CD4-positive, alpha-beta memory T cell (primary cell): ENCODE measurements at regions of chr3 and their contacts with region 1.

Region 1: GRCh38 chr3:52339612-52340011 is 23.5 kb downstream of the DNAH1 start:
- DNase-seq: peak; percentile 64 to 82 (median 79)
- H3K4me3 ChIP-seq: no peak overlapping the region
- H3K4me3 Mint-ChIP-seq: no peak overlapping the region
- H3K27ac ChIP-seq: no peak overlapping the region
- H3K27ac Mint-ChIP-seq: peak overlapping the region in 6 of 7 donors; percentile 12 to 88 (median 52)
- H3K4me1 ChIP-seq: no peaks in the 10 kb centered on the region
- H3K4me1 Mint-ChIP-seq: peaks cover 7 to 10% (median 8%) of the 10 kb centered on the region in 4 donors
- H3K27me3 ChIP-seq: no peaks in the 10 kb centered on the region
- H3K27me3 Mint-ChIP-seq: no peaks in the 10 kb centered on the region

Region 2: GRCh38 chr3:52001443-52001974 is 338.1 kb before region 1 on chr3:
- CTCF ChIA-PET with region 1: interaction called, 8 read pairs
- POLR2A ChIA-PET with region 1: no interaction called
- intact Hi-C with region 1: loop called (anchors 5 kb)
- DNase-seq: peak; percentile 81 to 86 (median 84)
- H3K4me3 ChIP-seq: no peak overlapping the region
- H3K4me3 Mint-ChIP-seq: peak overlapping the region in 5 of 8 donors; percentile 4 to 26 (median 8)
- H3K27ac ChIP-seq: no peak overlapping the region
- H3K27ac Mint-ChIP-seq: peak overlapping the region in 4 of 7 donors; percentile 46 to 80 (median 60)
- H3K4me1 ChIP-seq: peaks cover 21% of the 10 kb centered on the region
- H3K4me1 Mint-ChIP-seq: peaks cover 3 to 22% (median 12%) of the 10 kb centered on the region in 4 donors
- H3K27me3 ChIP-seq: no peaks in the 10 kb centered on the region
- H3K27me3 Mint-ChIP-seq: no peaks in the 10 kb centered on the region

Region 3: DNA sequence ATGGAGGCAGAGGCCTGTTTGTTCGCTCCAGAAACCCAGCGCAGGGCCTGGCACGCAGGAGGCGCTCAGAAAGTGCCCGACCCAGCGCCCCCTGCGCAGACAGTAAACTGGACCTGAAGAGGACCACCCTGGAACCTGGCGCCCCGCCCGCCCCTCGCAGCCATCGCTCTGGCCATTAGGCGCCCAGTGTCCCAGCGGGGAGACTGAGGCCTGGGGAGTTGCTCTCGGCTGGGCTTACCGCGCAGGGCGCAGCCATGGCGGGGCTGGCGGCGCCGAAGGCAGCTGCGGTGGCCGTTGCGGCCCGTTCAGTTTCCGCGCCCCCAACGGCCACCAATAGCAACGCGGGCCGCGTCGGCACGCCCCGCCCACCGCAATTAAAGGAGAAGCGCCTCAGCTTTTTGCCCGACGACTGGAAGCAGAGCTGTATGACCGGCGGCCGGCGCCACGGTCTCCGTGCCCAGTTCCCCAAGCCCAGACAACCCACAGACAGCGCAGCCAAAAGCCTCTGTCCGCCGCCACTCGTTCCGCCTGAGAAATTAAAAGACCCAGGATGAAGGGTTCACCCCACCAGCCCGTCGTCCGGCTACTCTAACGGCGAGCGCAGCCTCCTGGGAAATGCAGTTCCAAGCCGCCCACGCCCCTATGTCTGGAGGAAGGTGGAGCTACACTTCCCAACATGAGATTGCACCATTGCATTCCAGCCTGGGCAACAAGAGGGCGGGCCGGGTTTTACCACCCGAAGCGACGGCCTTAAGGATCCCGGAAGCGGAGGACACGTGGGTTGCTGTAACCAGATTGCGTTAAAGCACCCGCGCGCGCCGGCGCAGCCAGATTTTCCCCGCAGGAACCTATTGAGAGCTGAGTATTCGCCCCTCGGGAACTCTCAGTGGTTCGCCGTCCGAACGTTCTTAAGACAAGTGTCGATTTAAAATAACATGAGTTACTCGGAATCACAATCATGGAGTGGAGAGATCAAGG is 185.2 kb before region 1 on chr3 and contains the start of gene POC1A:
- CTCF ChIA-PET with region 1: interaction called, 12 read pairs
- POLR2A ChIA-PET with region 1: no interaction called
- intact Hi-C with region 1: no loop called
- DNase-seq: peak; percentile 83 to 90 (median 85)
- H3K4me3 ChIP-seq: peak within 1 kb of the TSS; percentile 93 to 95
- H3K4me3 Mint-ChIP-seq: peak within 1 kb of the TSS; percentile 93 to 98 (median 97)
- H3K27ac ChIP-seq: peak within 1 kb of the TSS; percentile 74
- H3K27ac Mint-ChIP-seq: peak within 1 kb of the TSS; percentile 95 to 98 (median 98)
- H3K4me1 ChIP-seq: peaks cover 13% of the 10 kb centered on the region
- H3K4me1 Mint-ChIP-seq: peaks cover 3 to 15% (median 8%) of the 10 kb centered on the region in 4 donors
- H3K27me3 ChIP-seq: no peaks in the 10 kb centered on the region
- H3K27me3 Mint-ChIP-seq: no peaks in the 10 kb centered on the region
- total RNA-seq, gene POC1A: 0.99 to 1.1 TPM

Region 4: DNA sequence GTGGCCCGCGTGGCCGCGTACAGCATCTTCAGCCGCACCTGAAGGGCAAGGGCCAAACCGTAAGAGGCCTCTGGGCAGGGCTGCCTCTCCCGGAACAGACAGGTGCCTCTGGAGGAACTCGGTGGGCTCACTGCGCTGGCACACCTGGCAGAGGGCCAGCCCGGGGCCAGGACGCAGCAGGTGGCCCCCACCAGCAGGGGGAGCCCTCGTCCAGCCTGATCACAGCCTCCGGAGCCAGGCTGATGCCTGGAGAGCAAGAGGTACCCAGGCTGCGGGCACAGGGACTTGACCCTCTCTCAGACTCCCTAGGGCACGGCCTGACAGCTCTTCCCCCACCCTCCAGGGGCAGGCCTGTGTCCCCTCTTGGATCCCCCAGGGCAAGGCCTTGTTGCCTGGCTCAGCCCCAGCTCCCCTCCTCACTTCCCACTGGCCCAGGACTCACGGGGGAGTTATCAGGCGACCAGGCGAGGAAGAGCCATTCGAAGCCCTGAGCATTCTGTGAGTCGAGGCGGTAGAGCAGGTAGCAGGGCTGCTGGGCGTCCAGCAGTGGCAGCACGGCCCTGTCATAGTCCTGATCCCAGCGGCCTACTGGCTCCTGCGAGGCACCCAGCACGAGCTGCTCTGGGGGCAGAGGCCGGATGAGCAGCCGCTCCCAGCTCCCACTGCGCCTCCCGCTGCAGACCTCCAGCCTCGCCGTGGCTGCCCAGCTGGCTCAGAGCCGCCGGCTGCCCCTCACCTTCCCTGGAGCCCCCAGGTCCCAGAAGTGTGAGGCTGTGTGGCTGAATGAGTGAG is 107.9 kb before region 1 on chr3:
- CTCF ChIA-PET with region 1: interaction called, 283 read pairs
- POLR2A ChIA-PET with region 1: interaction called, 19 read pairs
- intact Hi-C with region 1: loop called (anchors 1 kb)
- DNase-seq: peak; percentile 82 to 88 (median 85)
- H3K4me3 ChIP-seq: no peak overlapping the region
- H3K4me3 Mint-ChIP-seq: peak overlapping the region in 7 of 8 donors; percentile 35 to 82 (median 66)
- H3K27ac ChIP-seq: no peak overlapping the region
- H3K27ac Mint-ChIP-seq: peak overlapping the region; percentile 29 to 89 (median 81)
- H3K4me1 ChIP-seq: peaks cover 57% of the 10 kb centered on the region
- H3K4me1 Mint-ChIP-seq: peaks cover 23 to 77% (median 43%) of the 10 kb centered on the region in 4 donors
- H3K27me3 ChIP-seq: no peaks in the 10 kb centered on the region
- H3K27me3 Mint-ChIP-seq: no peaks in the 10 kb centered on the region

Region 5: GRCh38 chr3:52253314-52254304 is 86.0 kb before region 1 on chr3:
- CTCF ChIA-PET with region 1: interaction called, 16 read pairs
- POLR2A ChIA-PET with region 1: interaction called, 3 read pairs
- intact Hi-C with region 1: no loop called
- DNase-seq: peak; percentile 90 to 97 (median 93)
- H3K4me3 ChIP-seq: peak overlapping the region; percentile 10 to 16
- H3K4me3 Mint-ChIP-seq: peak overlapping the region; percentile 85 to 97 (median 90)
- H3K27ac ChIP-seq: peak overlapping the region; percentile 86
- H3K27ac Mint-ChIP-seq: peak overlapping the region; percentile 97 to 100 (median 100)
- H3K4me1 ChIP-seq: peaks cover 99% of the 10 kb centered on the region
- H3K4me1 Mint-ChIP-seq: peaks cover 54 to 99% (median 82%) of the 10 kb centered on the region in 4 donors
- H3K27me3 ChIP-seq: no peaks in the 10 kb centered on the region
- H3K27me3 Mint-ChIP-seq: no peaks in the 10 kb centered on the region

Region 6: GRCh38 chr3:52291508-52292181 is 48.0 kb before region 1 on chr3:
- CTCF ChIA-PET with region 1: interaction called, 21 read pairs
- POLR2A ChIA-PET with region 1: interaction called, 13 read pairs
- intact Hi-C with region 1: loop called (anchors 1 kb)
- DNase-seq: no peak
- H3K4me3 ChIP-seq: no peak overlapping the region
- H3K4me3 Mint-ChIP-seq: peak overlapping the region in 4 of 8 donors; percentile 29 to 78 (median 40)
- H3K27ac ChIP-seq: no peak overlapping the region
- H3K27ac Mint-ChIP-seq: peak overlapping the region in 4 of 7 donors; percentile 35 to 83 (median 64)
- H3K4me1 ChIP-seq: peaks cover 31% of the 10 kb centered on the region
- H3K4me1 Mint-ChIP-seq: peaks cover 18 to 40% (median 27%) of the 10 kb centered on the region in 4 donors
- H3K27me3 ChIP-seq: no peaks in the 10 kb centered on the region
- H3K27me3 Mint-ChIP-seq: no peaks in the 10 kb centered on the region

Region 7: GRCh38 chr3:52385157-52385556 is 45.5 kb after region 1 on chr3:
- CTCF ChIA-PET with region 1: no interaction called
- POLR2A ChIA-PET with region 1: no interaction called
- intact Hi-C with region 1: no loop called
- DNase-seq: no peak
- H3K4me3 ChIP-seq: no peak overlapping the region
- H3K4me3 Mint-ChIP-seq: no peak overlapping the region
- H3K27ac ChIP-seq: no peak overlapping the region
- H3K27ac Mint-ChIP-seq: no peak overlapping the region
- H3K4me1 ChIP-seq: no peaks in the 10 kb centered on the region
- H3K4me1 Mint-ChIP-seq: no peaks in the 10 kb centered on the region
- H3K27me3 ChIP-seq: no peaks in the 10 kb centered on the region
- H3K27me3 Mint-ChIP-seq: no peaks in the 10 kb centered on the region